ENCODE measurements at regions of chr6 and their contacts with region 1.

Region 1: DNA sequence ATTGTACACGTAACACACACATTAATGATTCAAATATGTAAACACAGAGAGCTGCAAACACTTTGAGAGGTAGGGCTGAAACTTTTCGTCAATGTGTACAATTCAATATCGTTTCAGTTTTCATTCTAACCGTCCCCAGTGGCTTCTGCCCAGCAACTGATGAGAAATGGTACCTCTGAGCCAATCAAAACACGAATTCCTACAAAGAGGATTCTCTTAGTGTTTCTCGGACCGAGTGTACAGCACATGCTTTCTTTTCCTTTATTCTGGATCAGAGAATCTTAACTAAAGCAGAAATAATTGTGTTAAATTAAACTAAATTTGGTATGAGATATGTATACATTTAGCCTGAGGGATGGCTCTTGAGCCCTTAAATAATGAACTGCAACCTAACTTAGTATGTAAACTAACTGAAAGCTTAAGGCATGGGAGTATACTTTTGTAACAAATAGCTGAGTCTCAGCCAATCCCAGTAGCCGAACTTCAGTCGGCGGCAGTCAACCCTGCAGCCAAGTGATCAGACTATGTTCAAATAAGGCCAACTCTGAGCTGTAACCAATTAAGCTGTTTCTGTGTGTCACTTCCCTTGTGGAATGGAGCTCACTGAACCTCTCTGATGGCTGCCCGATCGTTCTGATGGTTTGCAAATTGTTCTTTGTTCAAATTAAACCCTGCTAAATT is 16.1 kb downstream of the BTN2A1 start:
- DNase-seq: peak; percentile 89
- H3K4me3 Mint-ChIP-seq: peak overlapping the region; percentile 100
- H3K27ac Mint-ChIP-seq: peak overlapping the region; percentile 100
- H3K4me1 Mint-ChIP-seq: peaks cover 51% of the 10 kb centered on the region
- H3K27me3 Mint-ChIP-seq: no peaks in the 10 kb centered on the region

Region 2: DNA sequence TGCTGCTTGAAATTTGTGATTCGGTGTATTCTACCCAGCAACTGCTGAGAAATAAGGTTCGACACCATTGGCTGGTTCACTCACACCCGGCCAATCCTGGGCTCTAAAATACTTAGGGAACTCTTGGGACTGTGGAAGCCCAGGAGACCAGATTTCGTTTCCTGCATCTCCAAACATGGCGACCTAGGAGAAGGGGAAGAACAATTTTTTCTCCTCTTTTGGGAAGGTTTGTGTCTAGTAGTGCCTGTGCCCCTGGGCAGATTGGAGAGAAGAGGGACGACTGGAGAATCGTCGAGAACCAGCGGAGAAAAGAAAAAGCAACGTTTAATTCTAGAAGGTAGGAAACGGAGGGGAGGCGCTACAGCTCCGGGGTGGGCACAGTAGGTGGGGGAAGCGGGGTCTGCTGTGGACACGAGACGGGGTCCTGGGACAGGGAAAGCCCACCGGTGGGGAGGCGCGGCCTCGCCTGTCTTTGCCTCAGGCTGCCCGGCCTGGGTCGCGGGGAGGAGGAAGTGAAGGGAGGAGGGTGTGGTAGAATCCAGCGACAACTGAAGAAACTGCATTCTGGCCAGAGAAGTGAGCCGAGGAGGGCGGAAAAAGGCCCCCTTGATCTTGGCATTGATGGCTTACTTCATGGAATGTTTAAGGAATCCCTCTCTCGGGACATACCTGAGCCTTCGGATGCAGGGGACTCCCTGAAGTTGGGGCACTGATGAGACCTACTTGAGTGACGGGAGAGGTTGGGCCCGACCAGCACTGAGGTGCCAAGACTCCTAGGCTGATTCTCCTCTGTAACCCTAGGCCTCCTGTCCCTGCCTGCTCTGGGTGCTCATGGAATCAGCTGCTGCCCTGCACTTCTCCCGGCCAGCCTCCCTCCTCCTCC is 15.9 kb before region 1 on chr6 and contains the start of gene BTN2A1:
- CTCF ChIA-PET with region 1: interaction called, 10 read pairs
- POLR2A ChIA-PET with region 1: no interaction called
- DNase-seq: peak; percentile 85
- H3K4me3 Mint-ChIP-seq: peak within 1 kb of the TSS; percentile 99
- H3K27ac Mint-ChIP-seq: peak within 1 kb of the TSS; percentile 97
- H3K4me1 Mint-ChIP-seq: peaks cover 53% of the 10 kb centered on the region
- H3K27me3 Mint-ChIP-seq: no peaks in the 10 kb centered on the region
- total RNA-seq, gene BTN2A1: 33.7 to 34.3 TPM